Dorsolateral prefrontal cortex (tissue), 120 donors: ENCODE measurements at regions of chr1 and their contacts with region 1.

Region 1: DNA sequence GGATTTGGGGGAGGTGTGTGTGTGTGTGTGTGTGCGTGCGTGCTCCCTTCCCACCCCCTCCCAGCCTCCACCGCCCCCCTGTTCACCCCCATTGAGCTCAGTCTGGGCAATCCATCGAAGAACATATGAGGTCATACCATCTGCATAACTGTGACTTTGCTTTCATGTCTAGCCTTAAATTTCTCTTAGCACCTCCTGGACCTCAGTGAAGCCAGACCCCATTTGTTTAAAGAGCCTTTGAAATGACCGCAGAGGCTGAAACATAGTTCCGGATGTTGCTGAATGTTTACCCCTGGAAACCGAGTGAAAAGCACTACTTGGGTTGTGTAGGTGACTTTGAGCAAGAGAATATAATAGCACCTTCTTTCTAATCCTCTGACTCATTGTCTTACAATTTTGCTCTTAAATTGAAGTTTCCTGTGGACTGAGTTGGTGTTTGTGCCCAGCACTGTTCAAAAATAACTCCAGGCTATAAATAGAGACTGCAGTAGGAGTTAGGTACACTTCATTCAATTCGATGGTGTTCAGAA is 75.4 kb downstream of the UBE4B start:
- DNase-seq: no peak
- H3K4me3 ChIP-seq: peak overlapping the region in 22 of 59 donors; percentile 0 to 33 (median 14)
- H3K27ac ChIP-seq: peak overlapping the region; percentile 63 to 97 (median 88)
- H3K27me3 ChIP-seq: no peaks in the 10 kb centered on the region
- CTCF ChIP-seq: no peak

Region 2: DNA sequence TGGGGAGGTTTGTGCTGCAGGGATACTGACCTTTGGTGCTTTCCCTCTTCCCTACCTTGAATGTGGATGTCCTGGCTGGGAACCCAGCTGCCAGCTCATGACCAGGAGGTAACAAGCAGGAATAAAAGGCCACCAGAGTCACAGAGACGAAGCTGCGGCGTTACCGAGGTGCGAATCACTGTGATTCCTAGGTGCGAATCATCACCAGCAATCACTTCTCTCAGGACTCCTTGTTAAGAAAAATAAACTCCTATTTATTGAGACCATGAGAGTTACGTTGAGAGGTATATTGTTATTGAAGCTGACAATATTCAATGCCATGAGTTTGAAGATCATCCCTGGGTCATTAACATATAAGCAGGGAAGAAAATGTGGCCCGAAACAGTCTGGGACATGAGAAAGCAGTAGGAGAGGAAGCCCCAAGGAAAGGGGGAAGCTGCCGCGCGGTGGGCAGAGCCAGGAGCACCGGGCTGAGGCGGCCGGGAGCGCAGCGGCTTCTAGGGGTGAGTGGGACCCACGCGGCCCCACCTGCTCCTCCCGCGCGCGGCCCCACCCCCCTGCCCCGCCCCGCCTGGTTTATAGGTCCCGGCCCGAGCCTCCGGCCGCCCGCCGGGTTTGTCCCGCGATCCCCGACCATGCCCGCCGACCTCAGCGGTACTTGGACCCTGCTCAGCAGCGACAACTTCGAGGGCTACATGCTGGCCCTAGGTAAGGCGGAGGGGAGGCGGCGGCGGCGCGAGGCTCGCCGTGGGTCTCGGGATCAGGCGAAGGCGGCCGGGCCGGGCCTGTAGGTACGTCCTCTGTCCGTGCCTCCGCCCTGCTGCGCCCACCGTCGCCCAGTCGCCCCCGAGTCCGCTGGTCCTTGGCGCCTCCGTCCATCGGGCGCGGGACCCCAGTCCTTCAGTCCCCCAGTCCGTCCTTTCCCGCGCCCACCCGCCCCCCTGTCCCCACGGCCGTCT is 111.3 kb before region 1 on chr1 and contains the start of gene RBP7:
- intact Hi-C with region 1: no loop called
- DNase-seq: peak in 1 of 10 donors; percentile 48
- H3K4me3 ChIP-seq: peak within 1 kb of the TSS; percentile 37 to 78 (median 63)
- H3K27ac ChIP-seq: peak within 1 kb of the TSS in 43 of 59 donors; percentile 1 to 84 (median 58)
- H3K27me3 ChIP-seq: peaks cover 0 to 33% (median 14%) of the 10 kb centered on the region in 45 donors
- CTCF ChIP-seq: no peak
- total RNA-seq, gene RBP7: 1.1 to 45.6 (median 6.9) TPM in 118 of 120 experiments, not detected in the others

Region 3: DNA sequence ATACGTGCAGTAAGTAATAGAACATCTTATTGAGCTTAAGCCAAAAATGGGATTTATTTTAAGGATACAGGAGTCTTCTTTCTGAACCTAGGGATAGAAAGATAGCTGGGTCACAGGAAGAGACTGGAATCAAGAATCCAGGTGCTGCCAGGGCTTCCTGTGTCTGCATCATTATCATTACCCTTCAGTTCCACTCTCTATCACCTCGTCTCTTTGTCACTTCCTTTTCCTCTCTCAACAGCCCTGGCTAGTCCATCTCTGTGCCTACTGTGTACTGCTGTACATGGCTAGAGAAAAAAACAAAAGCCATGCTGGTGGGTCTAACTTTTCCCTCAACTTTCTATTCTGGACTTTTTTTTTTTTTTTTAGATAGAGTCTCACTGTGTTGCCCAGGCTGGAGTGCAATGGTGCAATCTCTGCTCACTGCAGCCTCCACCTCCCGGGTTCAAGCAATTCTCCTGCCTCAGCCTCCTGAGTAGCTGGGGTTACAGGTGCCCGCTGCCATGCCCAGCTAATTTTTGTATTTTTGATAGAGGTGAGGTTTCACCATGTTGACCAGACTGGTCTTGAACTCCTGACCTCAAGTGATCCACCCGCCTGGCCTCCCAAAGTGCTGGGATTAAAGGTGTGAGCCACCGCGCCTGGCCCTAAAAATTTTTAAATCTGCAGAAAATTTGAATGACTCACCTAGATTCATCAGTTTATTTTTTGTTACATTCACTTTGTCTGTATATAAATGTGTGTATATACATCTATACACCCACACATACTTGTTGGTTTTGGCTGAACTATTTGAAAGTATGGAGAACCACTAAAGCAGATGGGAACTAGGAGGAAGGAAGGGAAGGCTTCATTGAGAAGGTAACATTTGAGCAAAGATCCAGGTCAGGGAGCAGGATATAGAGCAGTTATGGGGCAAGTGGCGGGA is 43.5 kb before region 1 on chr1:
- intact Hi-C with region 1: loop called in 1 of 2 experiments (anchors 5 kb)
- DNase-seq: peak in 1 of 10 donors; percentile 37
- H3K4me3 ChIP-seq: no peak overlapping the region
- H3K27ac ChIP-seq: peak overlapping the region in 57 of 59 donors; percentile 7 to 99 (median 92)
- H3K27me3 ChIP-seq: no peaks in the 10 kb centered on the region
- CTCF ChIP-seq: no peak

Region 4: DNA sequence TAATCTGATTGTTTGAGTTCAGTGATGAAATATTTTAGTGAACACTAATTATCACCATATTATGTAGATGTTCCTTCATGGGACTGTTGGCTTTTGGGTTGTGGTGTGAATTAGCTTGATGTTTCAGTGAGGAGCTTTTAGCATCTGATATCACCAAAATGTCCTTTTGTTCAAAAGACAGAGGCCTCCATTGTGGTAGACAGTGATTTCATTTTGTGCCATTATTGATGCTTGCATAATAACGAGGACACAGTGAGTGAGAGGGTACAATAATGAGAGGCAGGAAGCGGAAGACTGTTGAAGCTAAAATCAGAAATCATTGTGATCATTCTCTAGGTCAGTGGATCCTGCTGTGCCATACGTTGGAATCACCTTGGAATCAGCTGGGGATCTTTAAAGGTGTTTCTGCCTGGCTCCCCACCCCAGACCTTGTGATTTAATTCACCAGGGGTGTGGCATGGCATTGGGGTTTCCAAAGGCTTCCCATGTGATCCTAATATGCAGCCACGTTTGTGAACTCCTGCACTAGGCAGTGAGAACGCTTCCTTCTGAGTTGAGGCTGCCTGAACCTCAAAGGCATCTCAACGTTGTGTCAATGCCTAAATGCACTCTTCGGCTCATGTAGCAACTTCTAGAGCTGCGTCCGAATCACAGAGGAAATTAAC is 20.0 kb after region 1 on chr1:
- intact Hi-C with region 1: loop called in 1 of 2 experiments (anchors 2 kb)
- DNase-seq: peak in 2 of 10 donors; percentile 40 to 53
- H3K4me3 ChIP-seq: peak overlapping the region in 5 of 59 donors; percentile 1 to 39 (median 3)
- H3K27ac ChIP-seq: peak overlapping the region; percentile 31 to 99 (median 94)
- H3K27me3 ChIP-seq: no peaks in the 10 kb centered on the region
- CTCF ChIP-seq: peak in 3 of 56 donors; percentile 7 to 18 (median 11)